ENCODE measurements at regions of chr17 and their contacts with region 1.

Region 1: GRCh38 chr17:19377602-19378392 is 501 bp upstream of the MAPK7 start:
- DNase-seq: peak; percentile 83 to 98 (median 90)
- ATAC-seq: peak; percentile 87
- H3K4me3 ChIP-seq: peak overlapping the region; percentile 100
- H3K4me3 Mint-ChIP-seq: peak overlapping the region; percentile 100
- H3K27ac ChIP-seq: peak overlapping the region; percentile 75 to 93
- H3K27ac Mint-ChIP-seq: peak overlapping the region; percentile 90
- H3K4me1 ChIP-seq: peaks cover 31% of the 10 kb centered on the region
- H3K4me1 Mint-ChIP-seq: peaks cover 11% of the 10 kb centered on the region
- H3K27me3 ChIP-seq: no peaks in the 10 kb centered on the region
- H3K27me3 Mint-ChIP-seq: no peaks in the 10 kb centered on the region
- CTCF ChIP-seq: no peak

Region 2: GRCh38 chr17:19362277-19363113 is 15.3 kb before region 1 on chr17 and contains the start of gene B9D1:
- CTCF ChIA-PET with region 1: interaction called, 62 read pairs
- POLR2A ChIA-PET with region 1: interaction called, 58 read pairs
- intact Hi-C with region 1: loop called (anchors 1 kb)
- DNase-seq: peak; percentile 91 to 97 (median 94)
- ATAC-seq: peak; percentile 93
- H3K4me3 ChIP-seq: peak within 1 kb of the TSS; percentile 75
- H3K4me3 Mint-ChIP-seq: peak within 1 kb of the TSS; percentile 95
- H3K27ac ChIP-seq: peak within 1 kb of the TSS in 1 of 2 donors; percentile 29
- H3K27ac Mint-ChIP-seq: peak within 1 kb of the TSS; percentile 89
- H3K4me1 ChIP-seq: peaks cover 16% of the 10 kb centered on the region
- H3K4me1 Mint-ChIP-seq: peaks cover 14% of the 10 kb centered on the region
- H3K27me3 ChIP-seq: peaks cover 3 to 4% of the 10 kb centered on the region in 2 experiments
- H3K27me3 Mint-ChIP-seq: peaks cover 5% of the 10 kb centered on the region
- CTCF ChIP-seq: peak; percentile 99
- total RNA-seq, gene B9D1: 0.66 to 0.73 TPM

Region 3: GRCh38 chr17:19460700-19461099 is 82.9 kb after region 1 on chr17:
- CTCF ChIA-PET with region 1: no interaction called
- POLR2A ChIA-PET with region 1: interaction called, 17 read pairs
- intact Hi-C with region 1: no loop called
- DNase-seq: no peak
- ATAC-seq: no peak
- H3K4me3 ChIP-seq: no peak overlapping the region
- H3K4me3 Mint-ChIP-seq: no peak overlapping the region
- H3K27ac ChIP-seq: no peak overlapping the region
- H3K27ac Mint-ChIP-seq: peak overlapping the region; percentile 17
- H3K4me1 ChIP-seq: peaks cover 46% of the 10 kb centered on the region
- H3K4me1 Mint-ChIP-seq: peaks cover 57% of the 10 kb centered on the region
- H3K27me3 ChIP-seq: no peaks in the 10 kb centered on the region
- H3K27me3 Mint-ChIP-seq: no peaks in the 10 kb centered on the region
- CTCF ChIP-seq: no peak

Region 4: DNA sequence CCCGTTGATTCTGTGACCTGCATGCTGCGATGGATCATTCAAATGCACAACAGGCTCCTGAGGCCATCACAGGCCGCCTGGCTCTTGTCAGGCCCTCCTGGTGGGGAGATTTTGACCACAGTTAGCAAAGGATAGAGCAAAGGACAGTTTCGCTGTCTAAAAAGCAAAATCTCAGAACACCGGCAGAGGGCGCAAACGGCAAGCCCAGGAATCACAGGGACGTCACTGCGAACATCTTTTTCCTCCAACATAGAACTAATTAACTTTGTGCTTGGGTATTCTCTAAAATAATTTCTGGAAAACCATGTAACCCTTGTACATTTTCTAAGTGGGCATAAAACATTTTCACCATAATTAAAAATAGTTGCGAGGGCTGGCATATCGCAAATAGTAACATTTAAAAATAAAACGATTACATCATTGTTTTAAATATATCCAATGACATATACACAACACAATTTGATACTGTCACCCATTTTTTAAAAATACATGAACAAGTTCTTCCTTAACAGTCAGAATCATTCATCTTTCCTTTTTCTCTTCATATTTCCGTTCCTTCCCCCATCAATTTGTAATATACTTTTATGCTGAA is 136.2 kb after region 1 on chr17:
- CTCF ChIA-PET with region 1: no interaction called
- POLR2A ChIA-PET with region 1: no interaction called
- intact Hi-C with region 1: loop called (anchors 5 kb)
- DNase-seq: peak; percentile 42 to 84 (median 62)
- ATAC-seq: peak; percentile 75
- H3K4me3 ChIP-seq: no peak overlapping the region
- H3K4me3 Mint-ChIP-seq: no peak overlapping the region
- H3K27ac ChIP-seq: no peak overlapping the region
- H3K27ac Mint-ChIP-seq: peak overlapping the region; percentile 12
- H3K4me1 ChIP-seq: peaks cover 4% of the 10 kb centered on the region
- H3K4me1 Mint-ChIP-seq: peaks cover 6% of the 10 kb centered on the region
- H3K27me3 ChIP-seq: no peaks in the 10 kb centered on the region
- H3K27me3 Mint-ChIP-seq: no peaks in the 10 kb centered on the region
- CTCF ChIP-seq: peak; percentile 94

Region 5: GRCh38 chr17:19766422-19767270 is 388.8 kb after region 1 on chr17:
- CTCF ChIA-PET with region 1: no interaction called
- POLR2A ChIA-PET with region 1: interaction called, 18 read pairs
- intact Hi-C with region 1: loop called in 1 of 2 experiments (anchors 5 kb)
- DNase-seq: peak; percentile 62 to 89 (median 78)
- ATAC-seq: peak; percentile 80
- H3K4me3 ChIP-seq: no peak overlapping the region
- H3K4me3 Mint-ChIP-seq: peak overlapping the region; percentile 17
- H3K27ac ChIP-seq: no peak overlapping the region
- H3K27ac Mint-ChIP-seq: peak overlapping the region; percentile 84
- H3K4me1 ChIP-seq: peaks cover 54% of the 10 kb centered on the region
- H3K4me1 Mint-ChIP-seq: peaks cover 52% of the 10 kb centered on the region
- H3K27me3 ChIP-seq: no peaks in the 10 kb centered on the region
- H3K27me3 Mint-ChIP-seq: no peaks in the 10 kb centered on the region
- CTCF ChIP-seq: peak; percentile 97

Measured in CD4-positive, alpha-beta T cell (primary cell).